ENCODE measurements at regions of chr10 and their contacts with region 1.

Region 1: GRCh38 chr10:17669185-17669872 is 25.4 kb downstream of the STAM start:
- DNase-seq: no peak
- H3K4me3 Mint-ChIP-seq: peak overlapping the region; percentile 74
- H3K27ac Mint-ChIP-seq: peak overlapping the region; percentile 89
- H3K4me1 Mint-ChIP-seq: peaks cover 60% of the 10 kb centered on the region
- H3K27me3 Mint-ChIP-seq: no peaks in the 10 kb centered on the region

Region 2: GRCh38 chr10:17617031-17617911 is 52.1 kb before region 1 on chr10 and contains the start of gene HACD1:
- intact Hi-C with region 1: loop called (anchors 2 kb)
- DNase-seq: peak; percentile 29
- H3K4me3 Mint-ChIP-seq: peak within 1 kb of the TSS; percentile 86
- H3K27ac Mint-ChIP-seq: peak within 1 kb of the TSS; percentile 68
- H3K4me1 Mint-ChIP-seq: peaks cover 6% of the 10 kb centered on the region
- H3K27me3 Mint-ChIP-seq: peaks cover 43% of the 10 kb centered on the region
- total RNA-seq, gene HACD1: 0.80 and 1.5 TPM in 2 replicates

Region 3: GRCh38 chr10:17747883-17748550 is 78.7 kb after region 1 on chr10:
- intact Hi-C with region 1: no loop called
- DNase-seq: no peak
- H3K4me3 Mint-ChIP-seq: no peak overlapping the region
- H3K27ac Mint-ChIP-seq: no peak overlapping the region
- H3K4me1 Mint-ChIP-seq: peaks cover 10% of the 10 kb centered on the region
- H3K27me3 Mint-ChIP-seq: no peaks in the 10 kb centered on the region

Measured in activated T-helper 1 cell treated with anti-CD3 and anti-CD28 coated beads, Interleukin-12 subunit alpha, Interleukin-12 subunit beta, Interleukin-2, Interleukin-4 antibody, amounts not matched to agents 30 ng/mL and 10 ng/mL and 1 ng/mL, durations not matched to agents 14 hours and 24 hours and 36 hours (primary cell).